HEK293T (cell line): ENCODE measurements at regions of chr1 and their contacts with region 1.

Region 1: GRCh38 chr1:204417231-204417997 is 5.8 kb upstream of the PPP1R15B start:
- DNase-seq: peak; percentile 53

Region 2: GRCh38 chr1:204398217-204399081 is 19.0 kb before region 1 on chr1:
- CTCF ChIA-PET with region 1: interaction called, 11 read pairs
- POLR2A ChIA-PET with region 1: interaction called, 8 read pairs
- DNase-seq: peak; percentile 90

Region 3: DNA sequence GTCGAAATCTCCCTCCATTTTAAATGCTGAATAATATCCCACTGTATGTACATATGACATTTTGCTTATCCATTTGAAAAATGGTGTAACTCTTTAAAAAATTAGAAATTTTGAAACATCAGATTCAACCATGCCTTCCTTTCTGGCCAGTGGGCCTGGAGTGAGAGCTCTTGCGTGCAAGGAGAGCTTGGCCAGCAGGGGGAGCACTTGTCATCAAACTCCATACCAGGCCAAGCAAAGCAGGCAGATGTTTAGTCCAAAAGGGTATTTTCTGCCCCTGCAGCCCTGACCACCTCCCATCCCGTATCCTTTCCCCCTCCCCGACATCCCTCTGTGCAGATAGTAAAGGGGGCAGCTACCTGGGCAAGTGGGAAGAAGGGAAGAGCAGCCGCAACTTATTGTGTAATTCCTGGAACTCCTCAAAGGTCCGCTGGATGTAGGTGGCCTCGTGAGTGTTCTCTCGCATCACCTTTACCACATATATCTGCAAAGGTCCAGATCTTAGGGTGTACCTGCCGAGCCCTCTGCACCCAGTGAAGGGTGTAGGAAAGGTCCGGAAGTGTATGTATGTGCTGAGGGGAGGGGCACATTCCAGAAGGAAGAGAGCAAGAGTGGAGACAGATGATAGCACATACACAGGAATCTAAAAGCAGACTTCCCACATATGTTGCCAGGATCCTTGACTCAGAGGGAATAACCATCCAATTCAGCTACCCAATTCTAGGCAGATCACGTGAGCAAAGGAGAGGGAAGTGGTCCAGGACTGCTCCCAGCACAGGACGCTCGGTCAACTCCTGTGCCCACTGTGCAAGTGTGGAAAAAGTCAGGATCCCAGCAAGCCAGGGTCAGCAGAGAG is 14.1 kb after region 1 on chr1:
- CTCF ChIA-PET with region 1: interaction called, 10 read pairs
- POLR2A ChIA-PET with region 1: no interaction called
- DNase-seq: peak; percentile 87

Region 4: GRCh38 chr1:204506961-204507387 is 89.6 kb after region 1 on chr1:
- CTCF ChIA-PET with region 1: interaction called, 4 read pairs
- POLR2A ChIA-PET with region 1: interaction called, 15 read pairs
- DNase-seq: peak; percentile 69